B cell (primary cell): ENCODE measurements at regions of chr5 and their contacts with region 1.

Region 1: GRCh38 chr5:149618581-149619251 is 37.4 kb downstream of the ARHGEF37 start:
- DNase-seq: peak; percentile 48
- ATAC-seq: peak; percentile 24
- H3K4me3 ChIP-seq: no peak overlapping the region
- H3K4me3 Mint-ChIP-seq: peak overlapping the region; percentile 78
- H3K27ac ChIP-seq: peak overlapping the region in 1 of 2 donors; percentile 67
- H3K27ac Mint-ChIP-seq: peak overlapping the region; percentile 91
- H3K4me1 ChIP-seq: peaks cover 3 to 28% of the 10 kb centered on the region in 2 donors
- H3K4me1 Mint-ChIP-seq: peaks cover 27% of the 10 kb centered on the region
- H3K27me3 ChIP-seq: no peaks in the 10 kb centered on the region
- H3K27me3 Mint-ChIP-seq: peaks cover 6% of the 10 kb centered on the region
- CTCF ChIP-seq: peak; percentile 43

Region 2: GRCh38 chr5:149381987-149382340 is 236.8 kb before region 1 on chr5:
- CTCF ChIA-PET with region 1: interaction called, 16 read pairs
- POLR2A ChIA-PET with region 1: no interaction called
- intact Hi-C with region 1: no loop called
- DNase-seq: peak; percentile 68
- ATAC-seq: peak; percentile 73
- H3K4me3 ChIP-seq: no peak overlapping the region
- H3K4me3 Mint-ChIP-seq: no peak overlapping the region
- H3K27ac ChIP-seq: no peak overlapping the region
- H3K27ac Mint-ChIP-seq: no peak overlapping the region
- H3K4me1 ChIP-seq: peaks cover 0 to 5% of the 10 kb centered on the region in 2 donors
- H3K4me1 Mint-ChIP-seq: peaks cover 2% of the 10 kb centered on the region
- H3K27me3 ChIP-seq: no peaks in the 10 kb centered on the region
- H3K27me3 Mint-ChIP-seq: no peaks in the 10 kb centered on the region
- CTCF ChIP-seq: peak; percentile 83

Region 3: DNA sequence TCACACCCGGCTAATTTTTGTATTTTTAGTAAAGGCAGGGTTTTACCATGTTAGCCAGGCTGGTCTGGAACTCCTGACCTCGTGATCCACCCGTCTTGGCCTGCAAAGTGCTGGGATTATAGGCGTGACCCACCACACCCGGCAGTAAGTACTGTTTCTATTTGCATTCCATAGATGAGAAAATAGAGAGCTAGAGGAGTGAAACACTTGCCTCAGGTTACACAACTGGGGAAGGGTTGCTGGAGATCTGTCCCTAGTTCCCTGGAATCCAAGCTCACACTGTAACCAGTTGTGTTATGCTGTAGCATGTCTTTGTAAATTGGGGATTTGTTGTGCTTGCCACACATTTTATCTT is 10.2 kb before region 1 on chr5:
- CTCF ChIA-PET with region 1: interaction called, 15 read pairs
- POLR2A ChIA-PET with region 1: interaction called, 3 read pairs
- intact Hi-C with region 1: no loop called
- DNase-seq: no peak
- ATAC-seq: no peak
- H3K4me3 ChIP-seq: no peak overlapping the region
- H3K4me3 Mint-ChIP-seq: no peak overlapping the region
- H3K27ac ChIP-seq: no peak overlapping the region
- H3K27ac Mint-ChIP-seq: no peak overlapping the region
- H3K4me1 ChIP-seq: peaks cover 10 to 23% of the 10 kb centered on the region in 2 donors
- H3K4me1 Mint-ChIP-seq: peaks cover 19% of the 10 kb centered on the region
- H3K27me3 ChIP-seq: no peaks in the 10 kb centered on the region
- H3K27me3 Mint-ChIP-seq: no peaks in the 10 kb centered on the region
- CTCF ChIP-seq: no peak